Esophagus muscularis mucosa (tissue), 4 donors: ENCODE measurements at regions of chr11 and their contacts with region 1.

Region 1: GRCh38 chr11:96168623-96169022 is 174.4 kb downstream of the MAML2 start:
- DNase-seq: no peak
- H3K4me3 ChIP-seq: no peak overlapping the region
- H3K27ac ChIP-seq: peak overlapping the region; percentile 16 to 56 (median 42)
- H3K4me1 ChIP-seq: peaks cover 11 to 32% (median 31%) of the 10 kb centered on the region in 4 donors
- H3K27me3 ChIP-seq: no peaks in the 10 kb centered on the region
- CTCF ChIP-seq: no peak
- EP300 ChIP-seq: no peak
- POLR2A ChIP-seq: no peak

Region 2: GRCh38 chr11:96235751-96236150 is 67.1 kb after region 1 on chr11:
- intact Hi-C with region 1: loop called (anchors 10 kb)
- DNase-seq: no peak
- H3K4me3 ChIP-seq: no peak overlapping the region
- H3K27ac ChIP-seq: peak overlapping the region; percentile 54 to 67 (median 57)
- H3K4me1 ChIP-seq: peaks cover 6 to 51% (median 46%) of the 10 kb centered on the region in 4 donors
- H3K27me3 ChIP-seq: no peaks in the 10 kb centered on the region
- CTCF ChIP-seq: no peak
- EP300 ChIP-seq: no peak
- POLR2A ChIP-seq: no peak